ENCODE measurements at regions of chr10 and their contacts with region 1.

Region 1: DNA sequence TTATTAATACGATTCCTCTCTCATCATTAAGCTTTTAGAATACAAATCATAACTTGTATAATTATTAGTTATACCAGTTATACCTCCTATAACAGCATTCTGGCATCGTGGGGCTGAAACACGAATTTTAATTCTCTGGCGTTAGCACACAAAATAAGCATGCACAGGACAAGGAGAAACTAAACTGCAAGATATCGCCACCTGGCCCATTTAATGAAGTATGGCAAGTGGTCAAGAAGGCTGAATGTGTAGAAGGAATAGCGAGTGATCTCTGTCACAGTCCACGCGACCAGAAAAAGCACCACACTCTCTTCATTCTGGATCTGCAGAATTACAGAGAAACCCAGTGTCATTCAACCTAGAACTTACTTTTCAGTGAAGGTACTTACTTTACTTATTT is 18.1 kb downstream of the HACD1 start:
- DNase-seq: peak; percentile 53
- H3K4me3 Mint-ChIP-seq: no peak overlapping the region
- H3K27ac Mint-ChIP-seq: no peak overlapping the region
- H3K4me1 Mint-ChIP-seq: no peaks in the 10 kb centered on the region
- H3K27me3 Mint-ChIP-seq: no peaks in the 10 kb centered on the region
- CTCF ChIP-seq: peak; percentile 30

Region 2: GRCh38 chr10:17409170-17409733 is 189.8 kb before region 1 on chr10:
- CTCF ChIA-PET with region 1: interaction called, 3 read pairs
- POLR2A ChIA-PET with region 1: no interaction called
- intact Hi-C with region 1: loop called (anchors 5 kb)
- DNase-seq: peak; percentile 33
- H3K4me3 Mint-ChIP-seq: no peak overlapping the region
- H3K27ac Mint-ChIP-seq: no peak overlapping the region
- H3K4me1 Mint-ChIP-seq: no peaks in the 10 kb centered on the region
- H3K27me3 Mint-ChIP-seq: no peaks in the 10 kb centered on the region
- CTCF ChIP-seq: peak; percentile 45

Region 3: DNA sequence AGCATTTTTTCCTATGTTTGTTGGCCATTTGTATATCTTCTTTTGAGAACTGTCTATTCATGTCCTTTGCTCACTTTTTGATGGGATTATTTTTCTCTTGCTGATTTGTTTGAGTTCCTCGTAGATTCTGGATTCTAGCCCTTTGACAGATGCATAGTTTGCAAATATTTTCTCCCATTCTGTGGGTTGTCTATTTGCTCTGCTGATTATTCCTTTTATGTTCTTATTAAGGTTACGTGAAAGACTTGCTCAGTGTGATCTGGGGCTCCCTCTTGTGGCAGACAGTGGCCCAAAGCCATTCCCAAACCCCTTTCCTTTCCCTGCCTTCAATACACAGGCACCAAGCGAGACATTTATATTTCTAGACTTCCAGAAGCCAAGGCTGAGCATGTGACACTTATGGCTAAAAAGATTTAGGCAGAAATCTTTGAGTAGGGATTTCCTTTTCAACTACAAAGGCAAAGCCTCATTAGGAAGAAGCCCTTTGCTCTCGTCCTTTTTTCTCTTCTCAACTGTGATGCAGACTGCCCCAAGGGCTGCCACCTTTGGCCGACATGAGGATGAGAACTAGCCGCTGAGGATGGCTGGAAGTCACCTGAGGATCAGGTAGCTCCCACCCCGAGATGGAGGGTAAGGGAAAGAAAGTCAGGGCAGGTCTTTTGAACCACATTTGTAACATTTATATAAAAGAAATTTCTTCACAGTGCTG is 168.3 kb before region 1 on chr10:
- CTCF ChIA-PET with region 1: interaction called, 4 read pairs
- POLR2A ChIA-PET with region 1: no interaction called
- intact Hi-C with region 1: loop called (anchors 1 kb)
- DNase-seq: peak; percentile 78
- H3K4me3 Mint-ChIP-seq: no peak overlapping the region
- H3K27ac Mint-ChIP-seq: no peak overlapping the region
- H3K4me1 Mint-ChIP-seq: peaks cover 5% of the 10 kb centered on the region
- H3K27me3 Mint-ChIP-seq: no peaks in the 10 kb centered on the region
- CTCF ChIP-seq: peak; percentile 81

Region 4: DNA sequence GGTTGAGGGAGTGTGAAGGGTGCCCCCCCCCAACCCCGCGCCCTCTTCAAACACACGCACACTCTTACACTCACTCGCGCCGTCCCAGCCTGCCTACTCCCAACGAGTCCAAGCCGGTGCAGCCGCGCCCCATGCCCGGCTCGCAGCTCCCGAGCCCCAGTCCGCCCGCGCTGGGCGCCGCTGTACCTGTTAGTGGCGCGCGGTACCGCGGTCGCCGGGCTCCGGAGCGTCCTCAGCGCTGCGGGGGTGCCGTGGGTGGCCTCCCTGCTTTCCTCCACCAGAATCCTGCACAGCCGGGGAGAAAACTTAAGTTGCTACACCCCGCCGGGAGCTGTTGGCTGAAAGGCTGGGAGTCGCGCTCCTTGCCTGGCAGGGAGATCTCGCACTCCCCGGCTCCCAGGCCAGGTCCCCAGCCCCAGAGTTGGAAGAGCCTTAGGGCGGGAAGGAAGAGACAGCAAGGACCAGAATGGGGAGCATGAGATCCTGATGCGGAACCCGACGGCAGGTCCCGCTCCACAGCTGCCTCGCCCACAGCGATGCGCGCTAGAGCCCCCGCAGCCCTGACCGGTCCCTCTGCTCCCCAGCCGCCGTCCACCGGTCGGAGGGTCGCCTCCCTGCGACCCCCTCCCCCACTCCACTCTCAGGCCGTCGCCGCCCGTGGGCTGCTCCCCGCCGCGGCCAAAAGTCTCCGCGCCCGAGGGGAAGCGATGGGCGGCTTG is 145.6 kb before region 1 on chr10:
- CTCF ChIA-PET with region 1: interaction called, 3 read pairs
- POLR2A ChIA-PET with region 1: no interaction called
- intact Hi-C with region 1: loop called (anchors 1 kb)
- DNase-seq: peak; percentile 70
- H3K4me3 Mint-ChIP-seq: peak overlapping the region; percentile 72
- H3K27ac Mint-ChIP-seq: no peak overlapping the region
- H3K4me1 Mint-ChIP-seq: no peaks in the 10 kb centered on the region
- H3K27me3 Mint-ChIP-seq: no peaks in the 10 kb centered on the region
- CTCF ChIP-seq: no peak

Region 5: GRCh38 chr10:17562614-17563013 is 36.5 kb before region 1 on chr10:
- CTCF ChIA-PET with region 1: no interaction called
- POLR2A ChIA-PET with region 1: no interaction called
- intact Hi-C with region 1: no loop called
- DNase-seq: no peak
- H3K4me3 Mint-ChIP-seq: no peak overlapping the region
- H3K27ac Mint-ChIP-seq: no peak overlapping the region
- H3K4me1 Mint-ChIP-seq: no peaks in the 10 kb centered on the region
- H3K27me3 Mint-ChIP-seq: no peaks in the 10 kb centered on the region
- CTCF ChIP-seq: no peak

Measured in MCF 10A (cell line).